GM12878 (cell line): ENCODE measurements at regions of chr4 and their contacts with region 1.

Region 1: GRCh38 chr4:71009890-71010588 is 16.6 kb downstream of the DCK start:
- DNase-seq: no peak
- ATAC-seq: peak; percentile 71
- H3K4me3 ChIP-seq: no peak overlapping the region
- H3K27ac ChIP-seq: no peak overlapping the region
- H3K4me1 ChIP-seq: peaks cover 8% of the 10 kb centered on the region
- H3K27me3 ChIP-seq: no peaks in the 10 kb centered on the region
- CTCF ChIP-seq: peak; percentile 47 to 61 (median 54); a peak in 5 of 6 replicates
- EP300 ChIP-seq: no peak
- POLR2A ChIP-seq: no peak
- RAD21 ChIP-seq: peak; percentile 62

Region 2: GRCh38 chr4:70601422-70602039 is 408.5 kb before region 1 on chr4:
- CTCF ChIA-PET with region 1: interaction called, 8 read pairs
- POLR2A ChIA-PET with region 1: no interaction called
- RAD21 ChIA-PET with region 1: interaction called, 4 read pairs
- SMC1A ChIA-PET with region 1: interaction called, 9 read pairs
- in situ Hi-C with region 1: no loop called
- intact Hi-C with region 1: loop called (anchors 1 kb)
- DNase-seq: peak; percentile 34
- ATAC-seq: peak; percentile 98
- H3K4me3 ChIP-seq: no peak overlapping the region
- H3K27ac ChIP-seq: no peak overlapping the region
- H3K4me1 ChIP-seq: no peaks in the 10 kb centered on the region
- H3K27me3 ChIP-seq: no peaks in the 10 kb centered on the region; a peak in 1 of 4 replicates
- CTCF ChIP-seq: peak; percentile 90 to 94 (median 92)
- EP300 ChIP-seq: no peak
- POLR2A ChIP-seq: no peak
- RAD21 ChIP-seq: peak; percentile 99

Region 3: DNA sequence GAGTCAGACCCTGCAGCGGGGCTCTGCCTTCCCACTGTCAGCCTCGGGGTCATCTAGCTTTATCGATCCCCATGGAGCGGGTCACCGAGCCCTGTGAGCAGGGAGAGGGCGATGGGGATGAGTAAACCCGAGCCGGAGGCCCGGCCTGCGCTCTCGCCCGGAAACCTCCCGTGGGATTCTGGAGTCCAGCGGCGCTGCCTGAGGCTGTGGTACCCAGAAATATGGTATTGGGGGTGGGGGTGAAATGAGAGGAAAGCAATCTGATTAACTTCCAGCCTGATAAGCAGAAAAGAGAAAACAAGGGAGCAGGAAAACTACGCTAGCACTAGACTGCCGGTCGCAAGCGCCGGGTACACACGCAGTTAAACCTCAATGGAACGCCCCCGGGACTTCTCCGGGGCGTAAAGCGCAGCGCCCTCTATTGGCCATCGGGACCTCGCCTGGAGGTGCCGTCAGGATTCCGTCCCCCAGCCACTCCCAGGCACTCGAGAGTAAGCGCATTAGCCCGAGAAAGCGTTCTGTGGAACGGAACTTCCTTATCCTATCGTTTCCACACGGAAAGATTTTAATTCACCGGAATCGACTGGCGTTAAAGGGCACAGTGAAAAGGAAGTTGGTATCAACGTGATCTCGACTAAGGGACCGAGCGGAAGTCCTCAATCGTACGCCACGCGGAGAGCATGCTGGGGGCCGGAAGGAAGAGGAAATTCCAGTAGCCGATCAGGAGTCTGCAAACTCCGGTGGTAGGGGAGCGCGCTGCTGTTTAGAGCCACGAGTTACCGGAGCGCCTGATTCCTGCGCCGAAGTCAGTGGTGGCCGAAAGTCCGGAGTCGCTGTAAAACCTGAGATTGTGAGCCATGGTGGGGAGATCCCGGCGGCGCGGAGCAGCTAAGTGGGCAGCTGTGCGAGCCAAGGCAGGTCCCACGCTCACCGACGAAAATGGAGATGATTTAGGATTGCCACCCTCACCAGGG is 321.9 kb before region 1 on chr4 and contains the start of gene UTP3:
- CTCF ChIA-PET with region 1: interaction called, 5 read pairs
- POLR2A ChIA-PET with region 1: no interaction called
- RAD21 ChIA-PET with region 1: interaction called, 15 read pairs
- SMC1A ChIA-PET with region 1: interaction called, 4 read pairs
- in situ Hi-C with region 1: no loop called
- intact Hi-C with region 1: no loop called
- DNase-seq: peak; percentile 95
- ATAC-seq: peak; percentile 93
- H3K4me3 ChIP-seq: peak within 1 kb of the TSS; percentile 90
- H3K27ac ChIP-seq: peak within 1 kb of the TSS; percentile 94
- H3K4me1 ChIP-seq: peaks cover 3% of the 10 kb centered on the region; the same call in 1 of the 2 replicates
- H3K27me3 ChIP-seq: no peaks in the 10 kb centered on the region
- CTCF ChIP-seq: peak; percentile 94 to 100 (median 97)
- EP300 ChIP-seq: no peak; a peak in 1 of 4 replicates
- POLR2A ChIP-seq: peak; percentile 89
- RAD21 ChIP-seq: peak; percentile 75
- polyA plus RNA-seq, gene UTP3: 15.8 to 21.1 TPM

Region 4: DNA sequence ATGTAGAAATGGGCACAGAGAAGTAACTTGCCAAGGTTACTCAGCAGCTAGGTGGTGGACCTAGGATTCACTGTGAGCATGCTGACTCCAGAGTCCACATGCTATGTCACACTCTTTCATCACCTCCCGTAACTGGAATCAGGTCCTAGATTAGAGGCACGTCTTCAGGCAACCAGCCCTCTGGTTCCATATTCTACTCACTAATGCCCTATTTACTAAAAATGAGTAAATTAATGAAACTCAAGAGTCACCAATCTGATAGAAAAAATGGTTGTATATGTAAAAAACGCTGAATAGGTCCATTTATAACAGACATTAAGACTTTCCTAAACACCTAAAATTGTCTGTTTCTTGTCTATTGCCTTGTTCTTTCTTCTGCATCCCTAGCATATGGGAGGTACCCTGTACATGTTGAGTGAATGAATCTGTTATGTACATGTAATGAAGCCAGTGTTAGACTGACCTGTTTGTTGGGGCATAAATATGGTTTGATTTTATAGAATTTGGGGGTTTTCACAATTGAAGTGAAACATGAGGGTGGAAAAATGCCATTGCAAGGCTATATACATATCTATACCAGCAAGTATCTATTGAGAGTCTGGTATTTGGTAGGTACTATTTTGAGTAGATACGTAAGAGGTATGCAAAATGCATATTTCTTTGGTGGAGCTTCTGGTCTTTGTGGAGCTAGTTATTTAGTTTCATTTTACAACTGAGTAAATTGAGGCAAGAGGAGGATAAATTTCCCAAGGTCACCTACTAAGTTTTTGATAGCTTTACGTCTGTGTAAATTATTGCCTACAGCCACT is 295.8 kb before region 1 on chr4:
- CTCF ChIA-PET with region 1: interaction called, 5 read pairs
- POLR2A ChIA-PET with region 1: interaction called, 11 read pairs
- RAD21 ChIA-PET with region 1: no interaction called
- SMC1A ChIA-PET with region 1: no interaction called
- in situ Hi-C with region 1: no loop called
- intact Hi-C with region 1: no loop called
- DNase-seq: no peak
- ATAC-seq: peak; percentile 77
- H3K4me3 ChIP-seq: peak overlapping the region; percentile 13; the same call in 1 of the 2 replicates
- H3K27ac ChIP-seq: peak overlapping the region; percentile 72
- H3K4me1 ChIP-seq: peaks cover 33% of the 10 kb centered on the region
- H3K27me3 ChIP-seq: no peaks in the 10 kb centered on the region
- CTCF ChIP-seq: no peak
- EP300 ChIP-seq: no peak
- POLR2A ChIP-seq: no peak
- RAD21 ChIP-seq: no peak

Region 5: DNA sequence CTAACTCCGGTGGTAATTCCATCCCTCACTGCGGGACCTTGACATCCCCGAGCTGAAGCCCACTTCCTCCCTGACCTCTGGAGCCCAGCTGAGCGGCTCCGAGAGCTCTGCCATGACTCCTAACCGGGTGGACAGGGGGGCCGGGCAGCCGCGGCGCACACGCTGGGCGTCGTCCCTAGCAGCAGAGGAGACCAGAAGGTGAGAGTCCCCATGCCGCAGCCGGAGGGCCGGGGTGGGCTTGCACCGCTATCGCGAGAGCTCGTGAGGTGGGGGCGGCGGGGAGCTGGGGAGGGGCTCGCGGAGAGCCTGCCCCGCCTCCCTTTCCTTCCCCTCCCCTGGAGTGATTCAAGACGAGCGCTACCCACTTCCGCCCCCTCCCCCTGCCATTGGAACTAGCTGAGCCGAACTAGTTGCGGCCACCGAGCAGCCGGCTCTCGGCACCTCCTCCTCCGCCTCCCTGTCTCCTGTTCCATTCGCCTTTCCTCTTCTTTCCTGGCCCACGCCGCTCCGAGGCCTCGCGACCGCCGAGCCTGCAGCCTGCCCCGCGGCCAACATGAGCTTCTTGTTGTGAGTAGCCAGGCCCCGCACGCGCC is 108.0 kb before region 1 on chr4 and contains the start of gene MOB1B:
- CTCF ChIA-PET with region 1: interaction called, 10 read pairs
- POLR2A ChIA-PET with region 1: interaction called, 3 read pairs
- RAD21 ChIA-PET with region 1: interaction called, 12 read pairs
- SMC1A ChIA-PET with region 1: interaction called, 8 read pairs
- in situ Hi-C with region 1: no loop called
- intact Hi-C with region 1: no loop called
- DNase-seq: peak; percentile 34
- ATAC-seq: peak; percentile 94
- H3K4me3 ChIP-seq: peak within 1 kb of the TSS; percentile 99
- H3K27ac ChIP-seq: peak within 1 kb of the TSS; percentile 53
- H3K4me1 ChIP-seq: no peaks in the 10 kb centered on the region
- H3K27me3 ChIP-seq: no peaks in the 10 kb centered on the region
- CTCF ChIP-seq: peak; percentile 23 to 49 (median 41); a peak in 4 of 6 replicates
- EP300 ChIP-seq: no peak
- POLR2A ChIP-seq: peak; percentile 83
- RAD21 ChIP-seq: peak; percentile 51
- polyA plus RNA-seq, gene MOB1B: 1.9 TPM

Region 6: DNA sequence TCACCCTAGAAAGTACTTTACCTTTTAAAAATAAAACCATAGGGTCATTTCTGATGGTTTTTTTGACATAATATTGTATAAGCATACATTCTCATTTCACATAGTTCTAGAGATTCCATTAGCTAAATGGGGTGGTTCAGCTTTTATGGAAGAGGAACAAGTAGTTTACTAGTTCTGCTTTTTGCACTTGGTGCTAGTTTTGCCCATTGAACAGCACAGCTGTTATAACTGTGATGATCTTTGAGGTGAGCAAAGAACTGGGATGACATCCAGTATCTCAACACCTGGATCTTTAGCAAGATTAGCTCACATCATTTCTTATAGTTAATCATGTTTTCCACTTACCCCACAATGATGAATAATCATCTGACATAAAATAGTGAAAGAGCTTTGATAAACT is 66.9 kb before region 1 on chr4:
- CTCF ChIA-PET with region 1: interaction called, 5 read pairs
- POLR2A ChIA-PET with region 1: no interaction called
- RAD21 ChIA-PET with region 1: interaction called, 5 read pairs
- SMC1A ChIA-PET with region 1: interaction called, 14 read pairs
- in situ Hi-C with region 1: no loop called
- intact Hi-C with region 1: no loop called
- DNase-seq: no peak
- ATAC-seq: peak; percentile 87
- H3K4me3 ChIP-seq: no peak overlapping the region
- H3K27ac ChIP-seq: no peak overlapping the region
- H3K4me1 ChIP-seq: no peaks in the 10 kb centered on the region
- H3K27me3 ChIP-seq: no peaks in the 10 kb centered on the region
- CTCF ChIP-seq: no peak
- EP300 ChIP-seq: no peak
- POLR2A ChIP-seq: no peak
- RAD21 ChIP-seq: no peak

Region 7: GRCh38 chr4:70993181-70994068 is 16.6 kb before region 1 on chr4 and contains the start of gene DCK:
- CTCF ChIA-PET with region 1: interaction called, 147 read pairs
- POLR2A ChIA-PET with region 1: interaction called, 38 read pairs
- RAD21 ChIA-PET with region 1: interaction called, 127 read pairs
- SMC1A ChIA-PET with region 1: interaction called, 169 read pairs
- in situ Hi-C with region 1: no loop called
- intact Hi-C with region 1: loop called (anchors 1 kb)
- DNase-seq: no peak
- ATAC-seq: peak; percentile 87
- H3K4me3 ChIP-seq: peak within 1 kb of the TSS; percentile 95
- H3K27ac ChIP-seq: peak within 1 kb of the TSS; percentile 82
- H3K4me1 ChIP-seq: 0 out of 2 replicates have a peak, but pooled peaks cover 3% of the 10 kb centered on the region
- H3K27me3 ChIP-seq: no peaks in the 10 kb centered on the region
- CTCF ChIP-seq: no peak
- EP300 ChIP-seq: no peak
- POLR2A ChIP-seq: peak; percentile 94
- RAD21 ChIP-seq: no peak
- polyA plus RNA-seq, gene DCK: 20.0 to 26.7 TPM

Region 8: GRCh38 chr4:72186714-72187113 is 1176.7 kb after region 1 on chr4:
- CTCF ChIA-PET with region 1: no interaction called
- POLR2A ChIA-PET with region 1: no interaction called
- RAD21 ChIA-PET with region 1: no interaction called
- SMC1A ChIA-PET with region 1: no interaction called
- in situ Hi-C with region 1: no loop called
- intact Hi-C with region 1: no loop called
- DNase-seq: no peak
- ATAC-seq: peak; percentile 89
- H3K4me3 ChIP-seq: no peak overlapping the region
- H3K27ac ChIP-seq: no peak overlapping the region
- H3K4me1 ChIP-seq: no peaks in the 10 kb centered on the region
- H3K27me3 ChIP-seq: no peaks in the 10 kb centered on the region
- CTCF ChIP-seq: no peak
- EP300 ChIP-seq: no peak
- POLR2A ChIP-seq: no peak
- RAD21 ChIP-seq: no peak